ENCODE measurements at regions of chr2 and their contacts with region 1.

Region 1: GRCh38 chr2:230007931-230008707 is 60.6 kb downstream of the SLC16A14 start:
- DNase-seq: peak; percentile 84
- H3K4me3 ChIP-seq: no peak overlapping the region
- H3K27ac ChIP-seq: no peak overlapping the region
- H3K4me1 ChIP-seq: peaks cover 0 to 7% (median 3%) of the 10 kb centered on the region in 4 donors
- H3K27me3 ChIP-seq: no peaks in the 10 kb centered on the region
- CTCF ChIP-seq: peak; percentile 78 to 85 (median 83)
- EP300 ChIP-seq: no peak
- POLR2A ChIP-seq: no peak

Region 2: DNA sequence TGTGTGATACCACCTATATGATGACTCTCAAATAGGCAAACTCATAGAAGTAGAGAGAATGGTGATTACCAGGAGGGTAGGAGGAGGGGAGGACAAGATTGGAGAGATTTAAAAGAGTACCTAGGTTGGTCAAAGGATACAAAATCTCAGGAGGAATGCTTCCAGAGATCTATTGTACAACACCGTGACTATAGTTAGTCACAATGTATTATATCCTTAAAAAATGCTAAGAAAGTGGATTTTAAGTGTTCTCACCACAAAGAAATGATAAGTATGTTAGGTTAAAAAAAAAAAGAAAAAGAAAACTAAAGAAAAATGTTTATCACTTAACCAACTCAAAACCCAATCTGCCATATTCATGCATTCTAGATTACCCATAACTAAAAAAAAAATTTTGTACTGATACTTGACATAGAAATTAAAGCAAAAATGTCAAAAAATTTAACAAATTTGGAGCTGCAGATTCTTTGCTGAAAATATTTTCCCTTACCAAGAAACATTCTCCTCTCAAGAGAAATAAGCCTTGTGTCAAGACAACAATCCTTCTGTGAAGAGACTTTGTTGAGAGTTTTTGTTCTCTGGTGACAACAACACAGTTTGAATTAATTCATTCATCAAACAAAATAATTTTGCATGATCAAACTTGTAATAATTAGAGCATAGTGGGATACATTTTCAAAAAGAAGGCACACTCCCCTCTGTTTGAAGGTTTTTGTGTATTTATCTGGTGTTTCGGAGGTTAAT is 506.9 kb before region 1 on chr2:
- in situ Hi-C with region 1: no loop called
- intact Hi-C with region 1: no loop called
- DNase-seq: no peak
- H3K4me3 ChIP-seq: no peak overlapping the region
- H3K27ac ChIP-seq: no peak overlapping the region
- H3K4me1 ChIP-seq: no peaks in the 10 kb centered on the region
- H3K27me3 ChIP-seq: no peaks in the 10 kb centered on the region
- CTCF ChIP-seq: no peak
- EP300 ChIP-seq: no peak
- POLR2A ChIP-seq: no peak

Region 3: GRCh38 chr2:229815858-229816257 is 192.3 kb before region 1 on chr2:
- in situ Hi-C with region 1: no loop called
- intact Hi-C with region 1: no loop called
- DNase-seq: no peak
- H3K4me3 ChIP-seq: no peak overlapping the region
- H3K27ac ChIP-seq: no peak overlapping the region
- H3K4me1 ChIP-seq: peaks cover 0 to 8% (median 0%) of the 10 kb centered on the region in 4 donors
- H3K27me3 ChIP-seq: no peaks in the 10 kb centered on the region
- CTCF ChIP-seq: no peak
- EP300 ChIP-seq: no peak
- POLR2A ChIP-seq: no peak

Region 4: DNA sequence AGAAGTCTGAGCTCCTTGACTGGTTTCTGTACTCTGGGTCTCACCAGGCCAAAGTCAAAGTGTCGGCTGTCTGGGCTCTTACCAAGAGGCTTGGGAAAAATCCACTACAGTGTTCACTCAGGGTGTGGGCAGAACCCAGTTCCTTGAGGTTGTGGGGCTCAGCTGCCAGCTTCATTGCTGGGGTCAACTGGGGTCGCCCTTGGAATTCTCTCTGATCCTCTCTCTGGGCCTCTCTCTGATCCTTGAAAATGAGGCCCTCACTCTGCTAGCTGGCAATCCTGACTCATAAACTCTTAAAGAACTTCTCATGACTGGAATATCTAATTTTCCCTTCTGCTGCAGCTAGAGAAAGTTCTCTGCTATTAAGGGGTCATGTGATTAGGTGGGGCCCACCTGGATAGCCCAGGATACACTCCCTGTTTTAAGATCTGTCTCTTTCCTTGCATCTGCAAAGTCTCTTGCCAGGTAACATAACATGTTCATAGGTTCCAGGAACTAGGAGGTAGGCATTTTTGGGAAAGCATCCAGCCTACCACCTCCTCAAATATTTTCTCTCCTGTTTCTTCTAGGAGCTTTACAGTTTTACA is 145.4 kb after region 1 on chr2:
- in situ Hi-C with region 1: loop called in 3 of 4 experiments (anchors 10 kb)
- intact Hi-C with region 1: no loop called
- DNase-seq: no peak
- H3K4me3 ChIP-seq: no peak overlapping the region
- H3K27ac ChIP-seq: no peak overlapping the region
- H3K4me1 ChIP-seq: no peaks in the 10 kb centered on the region
- H3K27me3 ChIP-seq: no peaks in the 10 kb centered on the region
- CTCF ChIP-seq: no peak
- EP300 ChIP-seq: no peak
- POLR2A ChIP-seq: no peak

Region 5: DNA sequence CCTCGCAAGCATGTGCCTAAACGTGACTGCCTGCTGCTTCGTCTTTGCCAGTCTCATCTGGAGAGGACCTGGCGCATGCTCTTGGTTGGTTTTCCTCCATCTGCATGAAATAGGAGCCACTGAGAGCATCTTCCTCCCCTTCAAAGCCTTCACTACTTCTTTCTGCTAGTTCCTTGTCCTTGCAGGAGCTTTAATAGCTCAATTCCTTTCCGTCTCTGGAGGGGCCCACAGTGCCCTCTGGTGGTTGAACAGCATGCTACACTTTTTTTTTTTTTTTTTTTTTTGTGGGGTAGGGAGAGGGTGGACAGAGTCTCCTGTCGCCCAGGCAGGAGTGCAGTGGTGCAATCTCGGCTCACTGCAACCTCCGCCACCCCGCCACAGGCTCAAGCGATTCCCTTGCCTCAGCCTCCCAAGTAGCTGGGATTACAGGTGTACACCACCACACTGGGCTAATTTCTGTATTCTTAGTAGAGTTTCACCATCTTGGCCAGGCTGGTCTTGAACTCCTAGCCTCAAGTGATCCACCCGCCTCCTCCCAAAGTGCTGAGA is 152.1 kb after region 1 on chr2:
- in situ Hi-C with region 1: loop called in 3 of 4 experiments (anchors 10 kb)
- intact Hi-C with region 1: loop called (anchors 5 kb)
- DNase-seq: peak; percentile 55
- H3K4me3 ChIP-seq: no peak overlapping the region
- H3K27ac ChIP-seq: no peak overlapping the region
- H3K4me1 ChIP-seq: peaks cover 0 to 3% (median 1%) of the 10 kb centered on the region in 4 donors
- H3K27me3 ChIP-seq: no peaks in the 10 kb centered on the region
- CTCF ChIP-seq: peak; percentile 77 to 83 (median 80)
- EP300 ChIP-seq: no peak
- POLR2A ChIP-seq: no peak

Region 6: DNA sequence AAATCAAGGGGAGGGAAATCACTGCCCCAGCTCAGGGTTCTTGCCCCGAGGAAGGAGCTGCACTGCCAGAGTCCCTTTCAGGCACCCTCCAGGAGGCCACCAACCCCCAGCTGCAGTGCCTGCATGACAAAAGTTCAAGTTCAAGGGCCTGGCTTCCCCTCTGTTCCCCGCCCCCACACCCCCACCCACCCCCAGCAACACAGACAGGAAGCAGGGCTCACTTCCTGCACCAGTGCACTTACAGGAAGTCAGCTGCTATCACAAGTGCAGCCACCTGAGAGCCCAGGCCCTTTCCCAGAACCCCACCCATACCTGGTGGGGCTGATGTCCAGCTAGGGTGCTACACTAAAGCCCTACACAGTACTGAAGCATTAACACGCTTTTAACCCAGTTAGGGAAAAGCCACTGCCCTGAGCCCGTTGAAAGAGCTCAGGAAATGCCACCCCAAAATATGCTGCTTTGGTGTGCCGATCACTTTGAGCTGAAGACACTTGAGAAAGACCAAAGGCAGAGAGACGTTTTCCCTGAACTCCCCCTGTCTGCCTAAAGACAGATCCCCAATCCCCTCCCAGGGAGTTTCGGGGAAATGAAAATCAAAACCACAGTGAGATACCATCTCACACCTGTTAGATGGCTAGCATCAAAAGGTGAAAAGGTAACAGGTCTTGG is 594.6 kb after region 1 on chr2:
- in situ Hi-C with region 1: loop called in 2 of 4 experiments (anchors 25 kb)
- intact Hi-C with region 1: no loop called
- DNase-seq: peak; percentile 51
- H3K4me3 ChIP-seq: no peak overlapping the region
- H3K27ac ChIP-seq: peak overlapping the region; percentile 14 to 55 (median 34)
- H3K4me1 ChIP-seq: no peaks in the 10 kb centered on the region
- H3K27me3 ChIP-seq: no peaks in the 10 kb centered on the region
- CTCF ChIP-seq: no peak
- EP300 ChIP-seq: no peak
- POLR2A ChIP-seq: no peak

Region 7: GRCh38 chr2:230614913-230615332 is 606.8 kb after region 1 on chr2:
- in situ Hi-C with region 1: loop called (anchors 5 to 25 kb)
- intact Hi-C with region 1: no loop called
- DNase-seq: peak; percentile 74
- H3K4me3 ChIP-seq: no peak overlapping the region
- H3K27ac ChIP-seq: peak overlapping the region in 1 of 4 donors; percentile 25
- H3K4me1 ChIP-seq: peaks cover 0 to 18% (median 5%) of the 10 kb centered on the region in 4 donors
- H3K27me3 ChIP-seq: no peaks in the 10 kb centered on the region
- CTCF ChIP-seq: no peak
- EP300 ChIP-seq: no peak
- POLR2A ChIP-seq: no peak